Activated T-helper 1 cell treated with anti-CD3 and anti-CD28 coated beads, Interleukin-12 subunit alpha, Interleukin-12 subunit beta, Interleukin-2, Interleukin-4 antibody, amounts not matched to agents 30 ng/mL and 10 ng/mL and 1 ng/mL, durations not matched to agents 14 hours and 24 hours and 36 hours (primary cell): ENCODE measurements at regions of chr10 and their contacts with region 1.

Region 1: GRCh38 chr10:110190170-110190569 is 17.2 kb upstream of the MXI1 start:
- DNase-seq: no peak
- H3K4me3 Mint-ChIP-seq: no peak overlapping the region
- H3K27ac Mint-ChIP-seq: no peak overlapping the region
- H3K4me1 Mint-ChIP-seq: peaks cover 13% of the 10 kb centered on the region
- H3K27me3 Mint-ChIP-seq: peaks cover 49% of the 10 kb centered on the region

Region 2: GRCh38 chr10:110129490-110129889 is 60.7 kb before region 1 on chr10:
- intact Hi-C with region 1: no loop called
- DNase-seq: no peak
- H3K4me3 Mint-ChIP-seq: no peak overlapping the region
- H3K27ac Mint-ChIP-seq: no peak overlapping the region
- H3K4me1 Mint-ChIP-seq: no peaks in the 10 kb centered on the region
- H3K27me3 Mint-ChIP-seq: no peaks in the 10 kb centered on the region

Region 3: GRCh38 chr10:110176141-110177030 is 13.8 kb before region 1 on chr10:
- intact Hi-C with region 1: loop called (anchors 2 kb)
- DNase-seq: no peak
- H3K4me3 Mint-ChIP-seq: no peak overlapping the region
- H3K27ac Mint-ChIP-seq: no peak overlapping the region
- H3K4me1 Mint-ChIP-seq: peaks cover 6% of the 10 kb centered on the region
- H3K27me3 Mint-ChIP-seq: peaks cover 47% of the 10 kb centered on the region